Left colon (tissue), 2 donors: ENCODE measurements at regions of chr20 and their contacts with region 1.

Region 1: DNA sequence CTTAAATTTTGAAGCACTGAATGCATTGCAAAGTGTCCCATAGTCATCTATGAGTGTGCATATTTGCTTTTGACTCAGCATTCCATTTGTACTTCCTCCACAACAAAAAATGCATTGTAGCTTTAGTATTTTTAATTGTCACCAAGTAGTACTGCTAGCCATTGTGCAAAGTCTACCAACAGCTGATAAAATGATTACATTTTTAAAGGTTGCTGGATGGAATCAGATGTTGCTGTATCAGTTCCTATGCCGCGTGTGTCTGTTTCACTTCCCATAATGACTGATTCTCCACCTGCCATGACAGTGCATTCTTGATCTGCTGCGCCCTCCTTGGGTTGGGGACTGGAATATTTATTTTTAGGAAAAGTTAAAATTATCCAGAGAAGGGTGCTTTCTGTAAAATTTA is 41.2 kb downstream of the SLX4IP start:
- DNase-seq: no peak
- ATAC-seq: no peak

Region 2: GRCh38 chr20:10540636-10541493 is 64.5 kb after region 1 on chr20:
- intact Hi-C with region 1: loop called in 1 of 2 experiments (anchors 10 kb)
- DNase-seq: no peak
- ATAC-seq: peak; percentile 74

Region 3: DNA sequence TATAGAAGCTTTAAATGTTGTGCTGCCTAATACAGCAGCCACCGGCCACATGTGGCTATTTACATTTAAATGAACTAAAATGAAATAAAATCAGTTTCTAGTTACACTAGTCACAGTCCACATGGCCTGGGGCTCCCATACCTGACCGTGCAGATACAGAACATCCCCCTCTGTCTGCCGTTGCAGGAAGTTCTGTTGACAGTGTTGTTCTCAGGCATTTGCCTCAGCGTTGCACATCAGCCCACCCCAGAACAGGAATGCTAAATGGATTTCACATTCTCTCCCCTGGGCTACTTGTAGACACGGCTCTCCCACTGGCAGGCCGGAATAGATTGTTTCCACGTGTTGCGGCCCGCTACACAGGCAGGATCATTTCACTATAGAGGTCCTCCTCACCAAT is 171.1 kb after region 1 on chr20:
- intact Hi-C with region 1: loop called in 1 of 2 experiments (anchors 10 kb)
- DNase-seq: no peak
- ATAC-seq: no peak